ENCODE measurements at regions of chr3 and their contacts with region 1.

Region 1: DNA sequence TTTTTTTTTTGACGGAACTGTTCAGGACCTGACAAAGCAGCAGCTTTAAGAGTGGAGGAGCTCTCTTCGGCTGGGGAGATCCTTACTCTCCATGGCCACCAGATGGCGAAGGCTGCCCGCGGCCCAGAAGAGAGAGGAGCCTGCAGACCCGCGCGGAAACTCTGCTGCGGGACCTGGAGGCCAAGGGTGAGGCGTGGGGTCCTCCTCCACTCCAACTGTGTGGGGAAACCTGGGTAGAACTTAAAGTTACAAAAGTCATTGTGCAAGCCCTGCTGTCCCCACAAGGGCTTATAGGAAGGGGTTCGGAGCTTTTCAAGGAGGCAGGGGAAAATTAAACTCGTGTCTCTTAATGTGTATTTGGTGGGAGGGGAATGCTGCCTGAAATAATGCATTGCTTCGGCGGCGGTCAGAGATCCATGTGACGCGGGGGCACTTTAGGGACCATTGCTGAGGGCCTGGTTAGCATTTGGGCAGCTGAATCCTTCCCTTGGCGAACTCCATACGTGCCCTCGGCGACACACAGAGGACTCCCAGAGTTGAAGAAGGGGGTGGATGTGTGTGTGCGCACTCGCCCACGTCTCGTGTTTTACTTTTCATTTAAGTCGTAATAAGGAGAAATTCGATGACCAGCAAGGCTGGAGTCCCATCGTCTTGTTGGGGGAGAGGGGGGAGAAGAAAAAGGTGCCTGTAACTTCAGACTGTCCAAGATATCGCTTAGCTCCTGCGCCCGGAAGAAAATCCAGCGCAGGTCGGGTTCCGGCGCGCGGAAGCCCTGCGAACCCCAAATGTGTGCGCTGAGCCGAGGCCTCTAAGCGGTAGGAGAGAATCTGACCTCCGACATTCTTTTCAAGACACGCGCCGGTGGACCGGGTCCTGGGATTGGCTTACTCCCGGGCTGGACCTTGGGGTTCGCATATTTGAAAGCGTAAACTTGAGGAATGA is 9.7 kb downstream of the EOMES start:
- DNase-seq: peak; percentile 59 to 88 (median 74)
- ATAC-seq: peak; percentile 88 to 92 (median 92)
- H3K4me3 ChIP-seq: peak overlapping the region; percentile 69 to 100
- H3K4me3 Mint-ChIP-seq: peak overlapping the region; percentile 93 to 97 (median 93)
- H3K27ac ChIP-seq: peak overlapping the region; percentile 69
- H3K27ac Mint-ChIP-seq: peak overlapping the region; percentile 87 to 89
- H3K4me1 ChIP-seq: peaks cover 15 to 38% of the 10 kb centered on the region in 2 experiments
- H3K4me1 Mint-ChIP-seq: peaks cover 29 to 36% (median 35%) of the 10 kb centered on the region in 3 donors
- H3K27me3 ChIP-seq: peaks cover 23 to 37% of the 10 kb centered on the region in 2 experiments
- H3K27me3 Mint-ChIP-seq: peaks cover 36 to 43% of the 10 kb centered on the region in 2 donors

Region 2: GRCh38 chr3:27127195-27127594 is 585.2 kb before region 1 on chr3:
- CTCF ChIA-PET with region 1: no interaction called
- POLR2A ChIA-PET with region 1: no interaction called
- DNase-seq: no peak
- ATAC-seq: no peak
- H3K4me3 ChIP-seq: no peak overlapping the region
- H3K4me3 Mint-ChIP-seq: no peak overlapping the region
- H3K27ac ChIP-seq: no peak overlapping the region
- H3K27ac Mint-ChIP-seq: no peak overlapping the region
- H3K4me1 ChIP-seq: no peaks in the 10 kb centered on the region
- H3K4me1 Mint-ChIP-seq: no peaks in the 10 kb centered on the region
- H3K27me3 ChIP-seq: no peaks in the 10 kb centered on the region
- H3K27me3 Mint-ChIP-seq: peaks cover 0 to 1% of the 10 kb centered on the region in 2 donors

Region 3: GRCh38 chr3:27228805-27229204 is 483.6 kb before region 1 on chr3:
- CTCF ChIA-PET with region 1: no interaction called
- POLR2A ChIA-PET with region 1: no interaction called
- DNase-seq: no peak
- ATAC-seq: no peak
- H3K4me3 ChIP-seq: no peak overlapping the region
- H3K4me3 Mint-ChIP-seq: no peak overlapping the region
- H3K27ac ChIP-seq: no peak overlapping the region
- H3K27ac Mint-ChIP-seq: no peak overlapping the region
- H3K4me1 ChIP-seq: no peaks in the 10 kb centered on the region
- H3K4me1 Mint-ChIP-seq: peaks cover under 1 to 2% (median under 1%) of the 10 kb centered on the region in 3 donors
- H3K27me3 ChIP-seq: peaks cover 0 to 3% of the 10 kb centered on the region in 2 experiments
- H3K27me3 Mint-ChIP-seq: peaks cover 0 to 4% of the 10 kb centered on the region in 2 donors

Region 4: DNA sequence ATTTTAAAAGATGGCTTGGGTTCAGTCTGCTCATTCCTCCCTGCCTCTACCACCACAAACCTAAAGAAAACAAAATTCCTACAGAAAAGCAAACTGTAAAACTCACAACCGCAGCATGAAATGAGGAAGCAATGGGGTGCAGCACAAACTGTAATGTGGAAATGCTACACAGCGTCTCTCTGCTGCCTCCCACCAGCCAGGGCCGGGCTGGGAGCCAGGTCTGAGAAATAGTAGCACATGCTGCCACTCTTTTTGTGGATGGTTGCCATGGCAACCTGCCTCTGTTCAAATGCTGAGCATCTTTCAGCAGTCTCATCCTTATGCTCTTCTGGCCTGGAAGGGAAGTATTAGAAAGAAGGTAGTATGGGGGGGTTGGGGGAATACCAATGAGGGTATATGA is 45.7 kb before region 1 on chr3:
- CTCF ChIA-PET with region 1: no interaction called
- POLR2A ChIA-PET with region 1: no interaction called
- DNase-seq: peak in 9 of 35 experiments; percentile 1 to 40 (median 12)
- ATAC-seq: peak in 2 of 4 experiments; percentile 46 to 49
- H3K4me3 ChIP-seq: no peak overlapping the region
- H3K4me3 Mint-ChIP-seq: no peak overlapping the region
- H3K27ac ChIP-seq: no peak overlapping the region
- H3K27ac Mint-ChIP-seq: peak overlapping the region in 1 of 2 donors; percentile 28
- H3K4me1 ChIP-seq: peaks cover 0 to 5% of the 10 kb centered on the region in 2 experiments
- H3K4me1 Mint-ChIP-seq: peaks cover 7 to 10% (median 9%) of the 10 kb centered on the region in 3 donors
- H3K27me3 ChIP-seq: no peaks in the 10 kb centered on the region
- H3K27me3 Mint-ChIP-seq: no peaks in the 10 kb centered on the region

Region 5: GRCh38 chr3:27699067-27699466 is 13.3 kb before region 1 on chr3:
- CTCF ChIA-PET with region 1: interaction called, 7 to 10 read pairs
- POLR2A ChIA-PET with region 1: no interaction called
- DNase-seq: no peak
- ATAC-seq: no peak
- H3K4me3 ChIP-seq: no peak overlapping the region
- H3K4me3 Mint-ChIP-seq: no peak overlapping the region
- H3K27ac ChIP-seq: no peak overlapping the region
- H3K27ac Mint-ChIP-seq: no peak overlapping the region
- H3K4me1 ChIP-seq: no peaks in the 10 kb centered on the region
- H3K4me1 Mint-ChIP-seq: no peaks in the 10 kb centered on the region
- H3K27me3 ChIP-seq: no peaks in the 10 kb centered on the region
- H3K27me3 Mint-ChIP-seq: no peaks in the 10 kb centered on the region

Region 6: GRCh38 chr3:27905625-27906024 is 193.2 kb after region 1 on chr3:
- CTCF ChIA-PET with region 1: interaction called, 5 to 13 read pairs
- POLR2A ChIA-PET with region 1: no interaction called
- DNase-seq: peak in 20 of 35 experiments; percentile 3 to 67 (median 14)
- ATAC-seq: peak; percentile 34 to 82 (median 52)
- H3K4me3 ChIP-seq: no peak overlapping the region
- H3K4me3 Mint-ChIP-seq: no peak overlapping the region
- H3K27ac ChIP-seq: no peak overlapping the region
- H3K27ac Mint-ChIP-seq: peak overlapping the region in 1 of 2 donors; percentile 76
- H3K4me1 ChIP-seq: peaks cover 18 to 23% of the 10 kb centered on the region in 2 experiments
- H3K4me1 Mint-ChIP-seq: peaks cover 42 to 48% (median 43%) of the 10 kb centered on the region in 3 donors
- H3K27me3 ChIP-seq: no peaks in the 10 kb centered on the region
- H3K27me3 Mint-ChIP-seq: no peaks in the 10 kb centered on the region

Region 7: GRCh38 chr3:28295898-28296490 is 583.6 kb after region 1 on chr3:
- CTCF ChIA-PET with region 1: interaction called, 9 to 14 read pairs
- POLR2A ChIA-PET with region 1: interaction called in 1 of 2 experiments, 11 read pairs
- DNase-seq: no peak
- ATAC-seq: peak in 1 of 4 experiments; percentile 22
- H3K4me3 ChIP-seq: peak overlapping the region in 1 of 2 donors; percentile 18
- H3K4me3 Mint-ChIP-seq: peak overlapping the region in 2 of 3 donors; percentile 13 to 30
- H3K27ac ChIP-seq: peak overlapping the region; percentile 39
- H3K27ac Mint-ChIP-seq: no peak overlapping the region
- H3K4me1 ChIP-seq: peaks cover 0 to 2% of the 10 kb centered on the region in 2 experiments
- H3K4me1 Mint-ChIP-seq: peaks cover 18 to 32% (median 24%) of the 10 kb centered on the region in 3 donors
- H3K27me3 ChIP-seq: no peaks in the 10 kb centered on the region
- H3K27me3 Mint-ChIP-seq: no peaks in the 10 kb centered on the region

Region 8: GRCh38 chr3:28317438-28318022 is 605.1 kb after region 1 on chr3:
- CTCF ChIA-PET with region 1: interaction called, 6 to 20 read pairs
- POLR2A ChIA-PET with region 1: interaction called in 1 of 2 experiments, 5 read pairs
- DNase-seq: peak in 25 of 35 experiments; percentile 1 to 79 (median 17)
- ATAC-seq: peak; percentile 76 to 94 (median 88)
- H3K4me3 ChIP-seq: no peak overlapping the region
- H3K4me3 Mint-ChIP-seq: no peak overlapping the region
- H3K27ac ChIP-seq: no peak overlapping the region
- H3K27ac Mint-ChIP-seq: no peak overlapping the region
- H3K4me1 ChIP-seq: no peaks in the 10 kb centered on the region
- H3K4me1 Mint-ChIP-seq: peaks cover 0 to 22% (median 14%) of the 10 kb centered on the region in 3 donors
- H3K27me3 ChIP-seq: no peaks in the 10 kb centered on the region
- H3K27me3 Mint-ChIP-seq: no peaks in the 10 kb centered on the region

Region 9: GRCh38 chr3:28334552-28334951 is 622.1 kb after region 1 on chr3:
- CTCF ChIA-PET with region 1: interaction called, 16 to 207 read pairs
- POLR2A ChIA-PET with region 1: interaction called in 1 of 2 experiments, 17 read pairs
- DNase-seq: no peak
- ATAC-seq: no peak
- H3K4me3 ChIP-seq: no peak overlapping the region
- H3K4me3 Mint-ChIP-seq: no peak overlapping the region
- H3K27ac ChIP-seq: no peak overlapping the region
- H3K27ac Mint-ChIP-seq: no peak overlapping the region
- H3K4me1 ChIP-seq: peaks cover 0 to 3% of the 10 kb centered on the region in 2 experiments
- H3K4me1 Mint-ChIP-seq: peaks cover 12 to 17% (median 13%) of the 10 kb centered on the region in 3 donors
- H3K27me3 ChIP-seq: no peaks in the 10 kb centered on the region
- H3K27me3 Mint-ChIP-seq: no peaks in the 10 kb centered on the region

Region 10: GRCh38 chr3:28348629-28349483 is 636.4 kb after region 1 on chr3 and contains the starts of genes AZI2 and ZCWPW2:
- CTCF ChIA-PET with region 1: interaction called, 6 to 19 read pairs
- POLR2A ChIA-PET with region 1: interaction called in 1 of 2 experiments, 20 read pairs
- DNase-seq: peak; percentile 81 to 95 (median 88)
- ATAC-seq: peak; percentile 89 to 97 (median 92)
- H3K4me3 ChIP-seq: peak within 1 kb of the TSS; percentile 92 to 95
- H3K4me3 Mint-ChIP-seq: peak within 1 kb of the TSS; percentile 88 to 99 (median 96)
- H3K27ac ChIP-seq: peak within 1 kb of the TSS; percentile 94
- H3K27ac Mint-ChIP-seq: peak within 1 kb of the TSS; percentile 95 to 99
- H3K4me1 ChIP-seq: peaks cover 12 to 26% of the 10 kb centered on the region in 2 experiments
- H3K4me1 Mint-ChIP-seq: peaks cover 47 to 65% (median 55%) of the 10 kb centered on the region in 3 donors
- H3K27me3 ChIP-seq: no peaks in the 10 kb centered on the region
- H3K27me3 Mint-ChIP-seq: no peaks in the 10 kb centered on the region
- total RNA-seq, gene AZI2: 29.5 to 38.6 (median 30.6) TPM
- total RNA-seq, gene ZCWPW2: 0.23 to 0.79 (median 0.50) TPM in 4 of 5 donors, not detected in the other